Activated CD4-positive, alpha-beta T cell treated with anti-CD3 and anti-CD28 coated beads, Interleukin-2, amount 10 ng/mL, durations not matched to agents 24 days and 14 days (primary cell): ENCODE measurements at regions of chr16 and their contacts with region 1.

Region 1: GRCh38 chr16:89507834-89508590 is at the start of gene SPG7:
- DNase-seq: peak; percentile 98
- H3K4me3 Mint-ChIP-seq: peak within 1 kb of the TSS; percentile 95
- H3K27ac Mint-ChIP-seq: peak within 1 kb of the TSS; percentile 95
- H3K4me1 Mint-ChIP-seq: peaks cover 27% of the 10 kb centered on the region
- H3K27me3 Mint-ChIP-seq: no peaks in the 10 kb centered on the region
- total RNA-seq, gene SPG7: 109 and 110 TPM in 2 replicates

Region 2: GRCh38 chr16:89241187-89242007 is 266.6 kb before region 1 on chr16:
- intact Hi-C with region 1: loop called (anchors 2 kb)
- DNase-seq: peak; percentile 93
- H3K4me3 Mint-ChIP-seq: peak overlapping the region; percentile 100
- H3K27ac Mint-ChIP-seq: peak overlapping the region; percentile 100
- H3K4me1 Mint-ChIP-seq: peaks cover 15% of the 10 kb centered on the region
- H3K27me3 Mint-ChIP-seq: no peaks in the 10 kb centered on the region

Region 3: GRCh38 chr16:89319883-89320781 is 187.9 kb before region 1 on chr16:
- intact Hi-C with region 1: loop called (anchors 1 kb)
- DNase-seq: peak; percentile 77
- H3K4me3 Mint-ChIP-seq: peak overlapping the region; percentile 71
- H3K27ac Mint-ChIP-seq: peak overlapping the region; percentile 88
- H3K4me1 Mint-ChIP-seq: peaks cover 83% of the 10 kb centered on the region
- H3K27me3 Mint-ChIP-seq: no peaks in the 10 kb centered on the region

Region 4: GRCh38 chr16:89330177-89330856 is 177.7 kb before region 1 on chr16:
- intact Hi-C with region 1: loop called (anchors 1 kb)
- DNase-seq: peak; percentile 80
- H3K4me3 Mint-ChIP-seq: peak overlapping the region; percentile 17
- H3K27ac Mint-ChIP-seq: peak overlapping the region; percentile 58
- H3K4me1 Mint-ChIP-seq: peaks cover 67% of the 10 kb centered on the region
- H3K27me3 Mint-ChIP-seq: no peaks in the 10 kb centered on the region

Region 5: GRCh38 chr16:89352091-89352681 is 155.8 kb before region 1 on chr16:
- intact Hi-C with region 1: no loop called
- DNase-seq: no peak
- H3K4me3 Mint-ChIP-seq: no peak overlapping the region
- H3K27ac Mint-ChIP-seq: peak overlapping the region; percentile 79
- H3K4me1 Mint-ChIP-seq: peaks cover 66% of the 10 kb centered on the region
- H3K27me3 Mint-ChIP-seq: no peaks in the 10 kb centered on the region

Region 6: GRCh38 chr16:89409161-89409711 is 98.8 kb before region 1 on chr16:
- intact Hi-C with region 1: loop called (anchors 1 kb)
- DNase-seq: peak; percentile 89
- H3K4me3 Mint-ChIP-seq: peak overlapping the region; percentile 58
- H3K27ac Mint-ChIP-seq: peak overlapping the region; percentile 84
- H3K4me1 Mint-ChIP-seq: peaks cover 77% of the 10 kb centered on the region
- H3K27me3 Mint-ChIP-seq: no peaks in the 10 kb centered on the region

Region 7: GRCh38 chr16:89490387-89491237 is 17.4 kb before region 1 on chr16 and contains the start of gene ANKRD11:
- intact Hi-C with region 1: loop called (anchors 1 kb)
- DNase-seq: peak; percentile 100
- H3K4me3 Mint-ChIP-seq: peak within 1 kb of the TSS; percentile 94
- H3K27ac Mint-ChIP-seq: peak within 1 kb of the TSS; percentile 96
- H3K4me1 Mint-ChIP-seq: peaks cover 41% of the 10 kb centered on the region
- H3K27me3 Mint-ChIP-seq: no peaks in the 10 kb centered on the region
- total RNA-seq, gene ANKRD11: 152 TPM in 2 replicates

Region 8: GRCh38 chr16:89545831-89546574 is 38.0 kb after region 1 on chr16:
- intact Hi-C with region 1: no loop called
- DNase-seq: no peak
- H3K4me3 Mint-ChIP-seq: no peak overlapping the region
- H3K27ac Mint-ChIP-seq: no peak overlapping the region
- H3K4me1 Mint-ChIP-seq: peaks cover 20% of the 10 kb centered on the region
- H3K27me3 Mint-ChIP-seq: no peaks in the 10 kb centered on the region

Region 9: GRCh38 chr16:89560378-89561141 is 52.5 kb after region 1 on chr16 and contains the start of gene RPL13:
- intact Hi-C with region 1: loop called (anchors 5 kb)
- DNase-seq: peak; percentile 98
- H3K4me3 Mint-ChIP-seq: peak within 1 kb of the TSS; percentile 94
- H3K27ac Mint-ChIP-seq: peak within 1 kb of the TSS; percentile 99
- H3K4me1 Mint-ChIP-seq: peaks cover 44% of the 10 kb centered on the region
- H3K27me3 Mint-ChIP-seq: no peaks in the 10 kb centered on the region
- total RNA-seq, gene RPL13: 2,234 and 2,296 TPM in 2 replicates